H1 (cell line): ENCODE measurements at regions of chr5 and their contacts with region 1.

Region 1: GRCh38 chr5:112492291-112492690 is 73.2 kb upstream of the EPB41L4A start:
- DNase-seq: peak; percentile 27 to 56
- H3K4me3 ChIP-seq: no peak overlapping the region
- H3K27ac ChIP-seq: no peak overlapping the region
- H3K4me1 ChIP-seq: no peaks in the 10 kb centered on the region
- H3K27me3 ChIP-seq: no peaks in the 10 kb centered on the region
- CTCF ChIP-seq: peak; percentile 82 to 98 (median 82)
- EP300 ChIP-seq: no peak
- POLR2A ChIP-seq: no peak
- RAD21 ChIP-seq: peak; percentile 67 to 75

Region 2: DNA sequence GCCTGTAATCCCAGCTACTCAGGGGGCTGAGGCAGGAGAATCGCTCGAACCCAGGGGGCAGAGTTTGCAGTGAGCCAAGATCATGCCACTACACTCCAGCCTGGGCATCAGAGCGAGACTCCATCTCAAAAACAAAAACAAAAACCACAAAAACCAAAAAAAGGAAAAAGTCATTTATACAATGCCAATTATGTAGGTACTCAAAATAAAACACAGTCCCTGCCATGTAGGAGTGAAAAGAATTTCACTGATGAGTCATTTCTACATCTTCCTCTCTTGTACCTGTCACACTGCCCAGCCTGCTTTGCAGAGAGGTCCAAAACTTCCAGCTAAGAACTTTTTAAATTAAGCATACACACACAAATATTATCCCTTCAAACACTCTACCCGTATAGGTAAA is 289.1 kb before region 1 on chr5:
- CTCF ChIA-PET with region 1: interaction called, 11 read pairs
- POLR2A ChIA-PET with region 1: no interaction called
- DNase-seq: no peak
- H3K4me3 ChIP-seq: no peak overlapping the region
- H3K27ac ChIP-seq: no peak overlapping the region
- H3K4me1 ChIP-seq: peaks cover 0 to 11% (median 3%) of the 10 kb centered on the region in 4 experiments; a peak in 3 of 7 replicates
- H3K27me3 ChIP-seq: no peaks in the 10 kb centered on the region
- CTCF ChIP-seq: no peak
- EP300 ChIP-seq: no peak
- POLR2A ChIP-seq: no peak
- RAD21 ChIP-seq: no peak

Region 3: DNA sequence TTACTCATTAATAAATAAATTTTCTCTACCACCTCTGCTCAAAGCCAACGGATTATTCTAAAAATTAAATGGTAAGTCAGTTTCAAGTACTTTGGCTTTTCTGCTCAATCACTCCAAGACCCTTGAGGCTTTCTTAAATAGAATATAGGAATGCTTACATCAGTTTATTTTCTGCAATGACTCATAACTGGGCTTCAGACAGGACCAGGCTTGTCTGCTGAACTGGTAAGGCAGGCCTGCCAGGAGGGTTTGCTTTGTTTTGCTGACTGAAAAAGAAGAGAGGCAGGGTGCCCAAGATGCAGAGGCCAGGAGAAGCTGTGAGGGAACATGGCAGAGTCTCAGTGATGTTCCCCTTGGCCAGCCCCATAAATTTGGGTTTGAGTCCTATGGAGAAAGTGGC is 12.9 kb before region 1 on chr5:
- CTCF ChIA-PET with region 1: interaction called, 49 read pairs
- POLR2A ChIA-PET with region 1: no interaction called
- DNase-seq: no peak
- H3K4me3 ChIP-seq: no peak overlapping the region
- H3K27ac ChIP-seq: no peak overlapping the region
- H3K4me1 ChIP-seq: no peaks in the 10 kb centered on the region
- H3K27me3 ChIP-seq: no peaks in the 10 kb centered on the region
- CTCF ChIP-seq: no peak
- EP300 ChIP-seq: no peak
- POLR2A ChIP-seq: no peak
- RAD21 ChIP-seq: no peak

Region 4: GRCh38 chr5:112529525-112529924 is 37.2 kb after region 1 on chr5:
- CTCF ChIA-PET with region 1: interaction called, 19 read pairs
- POLR2A ChIA-PET with region 1: interaction called, 3 read pairs
- DNase-seq: no peak
- H3K4me3 ChIP-seq: no peak overlapping the region
- H3K27ac ChIP-seq: no peak overlapping the region
- H3K4me1 ChIP-seq: peaks cover 0 to 4% (median 2%) of the 10 kb centered on the region in 4 experiments; a peak in 3 of 7 replicates
- H3K27me3 ChIP-seq: no peaks in the 10 kb centered on the region
- CTCF ChIP-seq: peak in 2 of 3 experiments; percentile 37 to 60; a peak in 2 of 4 replicates
- EP300 ChIP-seq: no peak
- POLR2A ChIP-seq: no peak
- RAD21 ChIP-seq: peak; percentile 44 to 54

Region 5: DNA sequence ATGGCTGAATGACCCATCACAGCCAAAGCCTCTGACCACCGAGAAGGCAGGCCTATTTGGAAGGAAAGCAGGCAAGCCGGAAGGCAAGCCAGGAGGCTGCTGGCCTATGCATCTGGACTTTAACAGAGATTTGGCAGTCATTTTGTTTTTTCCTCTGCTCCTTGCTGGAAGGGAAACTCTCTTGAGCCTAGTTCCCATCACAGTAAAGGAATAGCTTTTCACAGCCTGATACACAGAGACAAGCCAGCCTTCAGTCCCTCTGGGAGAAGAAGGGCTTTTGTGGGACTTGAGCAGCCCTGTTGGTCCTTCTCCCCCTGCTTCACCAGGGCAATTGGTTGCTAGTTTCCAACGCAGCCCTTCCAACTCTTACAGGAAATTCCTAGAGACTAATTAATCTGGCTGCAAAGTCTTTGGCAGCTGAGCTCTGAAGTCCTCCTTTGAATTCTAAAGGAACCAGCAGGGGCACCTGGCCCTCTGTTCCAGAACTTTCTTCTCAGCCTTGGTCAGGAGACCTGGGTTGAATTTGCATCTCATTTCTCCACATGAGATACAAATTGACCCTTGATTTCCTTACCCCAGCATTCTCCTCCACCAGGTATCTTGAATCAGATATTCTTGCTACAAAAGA is 84.1 kb after region 1 on chr5:
- CTCF ChIA-PET with region 1: no interaction called
- POLR2A ChIA-PET with region 1: no interaction called
- DNase-seq: no peak
- H3K4me3 ChIP-seq: no peak overlapping the region
- H3K27ac ChIP-seq: no peak overlapping the region
- H3K4me1 ChIP-seq: no peaks in the 10 kb centered on the region
- H3K27me3 ChIP-seq: no peaks in the 10 kb centered on the region
- CTCF ChIP-seq: no peak
- EP300 ChIP-seq: no peak
- POLR2A ChIP-seq: no peak
- RAD21 ChIP-seq: no peak

Region 6: DNA sequence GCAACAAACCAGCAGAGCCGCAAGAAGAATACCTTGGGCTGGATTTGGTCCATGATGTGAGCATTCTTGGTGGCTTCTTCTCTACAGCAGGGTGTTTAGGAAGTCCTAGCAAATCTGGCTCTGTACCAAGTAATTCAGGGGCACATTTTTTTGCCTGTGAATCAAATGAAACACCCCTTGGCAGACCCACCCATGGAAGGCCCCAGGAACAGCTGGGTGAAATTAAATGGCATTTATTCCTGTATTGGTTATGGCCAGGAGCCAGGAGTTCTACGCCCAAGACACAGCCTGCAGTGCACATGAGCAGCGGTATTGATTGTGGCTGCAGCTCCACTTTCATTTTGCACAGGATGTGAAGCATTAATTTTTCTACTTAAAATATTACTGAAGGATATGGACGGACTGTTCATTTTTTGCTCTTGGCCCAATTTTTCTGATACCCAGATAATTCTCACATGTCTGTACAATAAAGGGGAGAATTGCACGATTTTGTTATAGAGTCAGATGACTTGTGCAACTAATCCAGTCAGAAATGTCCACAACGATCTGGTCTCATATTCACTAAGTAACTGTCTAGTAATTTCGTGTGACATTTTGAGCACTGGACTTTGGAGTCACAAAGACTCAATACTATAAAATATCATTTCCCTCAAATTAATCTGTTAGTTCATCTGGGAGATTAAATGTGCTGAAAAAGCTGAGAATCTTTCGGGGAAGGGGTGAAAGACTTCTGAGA is 124.7 kb after region 1 on chr5:
- CTCF ChIA-PET with region 1: no interaction called
- POLR2A ChIA-PET with region 1: no interaction called
- DNase-seq: no peak
- H3K4me3 ChIP-seq: no peak overlapping the region
- H3K27ac ChIP-seq: no peak overlapping the region
- H3K4me1 ChIP-seq: no peaks in the 10 kb centered on the region
- H3K27me3 ChIP-seq: no peaks in the 10 kb centered on the region
- CTCF ChIP-seq: no peak
- EP300 ChIP-seq: no peak
- POLR2A ChIP-seq: no peak
- RAD21 ChIP-seq: no peak